Esophagus muscularis mucosa (tissue), 4 donors: ENCODE measurements at regions of chr7 and their contacts with region 1.

Region 1: DNA sequence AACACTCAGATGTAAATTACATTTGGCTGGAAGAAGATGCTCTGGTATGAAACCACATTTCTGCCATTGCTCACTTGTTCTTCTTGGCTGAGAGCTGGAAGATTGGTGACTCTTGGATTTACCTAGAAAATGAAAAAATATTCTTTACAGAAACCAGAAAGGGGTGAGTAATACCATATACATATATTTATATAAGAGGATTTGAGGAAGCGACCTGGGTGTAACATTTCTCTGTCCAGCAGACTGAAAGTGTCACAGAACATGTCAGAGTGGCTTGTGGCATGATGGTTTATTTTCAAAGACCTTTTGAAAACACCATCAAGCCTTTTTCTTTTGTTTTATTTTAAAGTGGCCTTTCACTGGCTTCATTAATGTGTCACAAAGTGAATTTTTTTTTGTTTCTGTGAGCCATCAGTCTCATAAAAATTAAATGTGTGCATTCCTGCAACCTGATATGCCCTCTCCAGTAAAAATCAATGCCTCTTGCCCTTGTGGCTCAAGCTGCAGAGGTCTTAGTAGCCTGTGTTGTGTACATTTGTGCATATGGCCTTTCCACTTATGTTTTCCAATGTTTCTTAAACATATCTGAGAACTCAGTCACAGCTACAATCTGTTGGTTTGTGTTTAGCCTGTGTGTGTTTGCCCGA is 23.5 kb downstream of the CREB5 start:
- DNase-seq: no peak
- H3K4me3 ChIP-seq: no peak overlapping the region
- H3K27ac ChIP-seq: no peak overlapping the region
- H3K4me1 ChIP-seq: peaks cover 0 to 20% (median 13%) of the 10 kb centered on the region in 4 donors
- H3K27me3 ChIP-seq: no peaks in the 10 kb centered on the region
- CTCF ChIP-seq: no peak
- EP300 ChIP-seq: no peak
- POLR2A ChIP-seq: no peak

Region 2: GRCh38 chr7:28246921-28247461 is 188.9 kb before region 1 on chr7:
- intact Hi-C with region 1: no loop called
- DNase-seq: no peak
- H3K4me3 ChIP-seq: no peak overlapping the region
- H3K27ac ChIP-seq: no peak overlapping the region
- H3K4me1 ChIP-seq: peaks cover 0 to 10% (median 0%) of the 10 kb centered on the region in 4 donors
- H3K27me3 ChIP-seq: no peaks in the 10 kb centered on the region
- CTCF ChIP-seq: no peak
- EP300 ChIP-seq: no peak
- POLR2A ChIP-seq: no peak

Region 3: GRCh38 chr7:28536259-28536658 is 100.4 kb after region 1 on chr7:
- intact Hi-C with region 1: loop called (anchors 5 kb)
- DNase-seq: no peak
- H3K4me3 ChIP-seq: no peak overlapping the region
- H3K27ac ChIP-seq: no peak overlapping the region
- H3K4me1 ChIP-seq: peaks cover 14 to 21% (median 18%) of the 10 kb centered on the region in 4 donors
- H3K27me3 ChIP-seq: no peaks in the 10 kb centered on the region
- CTCF ChIP-seq: peak; percentile 52 to 73 (median 60)
- EP300 ChIP-seq: no peak
- POLR2A ChIP-seq: no peak